Activated CD4-positive, alpha-beta T cell treated with anti-CD3 and anti-CD28 coated beads, Interleukin-2, amount 10 ng/mL, durations not matched to agents 24 days and 14 days (primary cell): ENCODE measurements at regions of chr9 and their contacts with region 1.

Region 1: GRCh38 chr9:77841739-77842386 is 189.7 kb downstream of the GNAQ start:
- DNase-seq: no peak
- H3K4me3 Mint-ChIP-seq: no peak overlapping the region
- H3K27ac Mint-ChIP-seq: no peak overlapping the region
- H3K4me1 Mint-ChIP-seq: peaks cover 11% of the 10 kb centered on the region
- H3K27me3 Mint-ChIP-seq: no peaks in the 10 kb centered on the region

Region 2: DNA sequence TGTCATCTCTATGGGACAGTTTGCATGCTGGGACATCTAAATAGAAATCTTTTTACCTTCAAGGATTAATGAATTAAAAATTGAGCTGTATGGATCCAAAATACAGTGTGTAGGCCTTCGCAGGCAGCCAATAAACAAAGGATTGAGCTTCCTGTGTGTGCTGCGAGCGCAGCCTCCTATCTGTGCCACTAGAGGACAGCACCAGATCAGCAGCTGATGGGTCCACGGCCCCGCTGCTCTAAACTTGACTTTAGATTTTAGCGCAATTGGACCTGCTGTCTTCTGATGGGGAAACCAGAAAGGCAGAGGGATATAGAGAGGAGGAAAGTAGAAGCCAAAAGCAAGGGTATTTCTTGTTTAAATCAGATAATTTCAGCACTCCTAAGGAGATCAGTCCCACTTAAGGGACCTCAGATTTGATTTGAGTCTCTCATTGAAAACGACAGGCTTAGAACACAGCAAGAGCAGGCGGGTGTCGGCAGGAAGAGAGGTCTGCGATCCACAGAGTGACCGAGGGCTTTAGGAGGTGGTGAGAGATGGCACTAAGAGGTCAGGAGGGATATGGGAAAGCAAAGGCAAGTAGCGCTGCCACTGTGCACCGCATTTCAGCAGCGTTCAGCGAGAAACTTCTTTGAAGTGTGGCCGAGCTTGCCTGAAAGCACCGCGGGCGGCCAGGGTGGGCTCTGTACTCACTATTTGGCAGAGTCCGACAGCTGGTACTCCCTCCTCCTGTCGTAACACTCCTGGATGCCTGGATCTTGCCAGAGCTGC is 408.0 kb before region 1 on chr9:
- intact Hi-C with region 1: loop called (anchors 2 kb)
- DNase-seq: peak; percentile 82
- H3K4me3 Mint-ChIP-seq: no peak overlapping the region
- H3K27ac Mint-ChIP-seq: no peak overlapping the region
- H3K4me1 Mint-ChIP-seq: no peaks in the 10 kb centered on the region
- H3K27me3 Mint-ChIP-seq: peaks cover 2% of the 10 kb centered on the region

Region 3: GRCh38 chr9:77556396-77556795 is 285.5 kb before region 1 on chr9:
- intact Hi-C with region 1: no loop called
- DNase-seq: no peak
- H3K4me3 Mint-ChIP-seq: no peak overlapping the region
- H3K27ac Mint-ChIP-seq: no peak overlapping the region
- H3K4me1 Mint-ChIP-seq: no peaks in the 10 kb centered on the region
- H3K27me3 Mint-ChIP-seq: peaks cover 11% of the 10 kb centered on the region

Region 4: DNA sequence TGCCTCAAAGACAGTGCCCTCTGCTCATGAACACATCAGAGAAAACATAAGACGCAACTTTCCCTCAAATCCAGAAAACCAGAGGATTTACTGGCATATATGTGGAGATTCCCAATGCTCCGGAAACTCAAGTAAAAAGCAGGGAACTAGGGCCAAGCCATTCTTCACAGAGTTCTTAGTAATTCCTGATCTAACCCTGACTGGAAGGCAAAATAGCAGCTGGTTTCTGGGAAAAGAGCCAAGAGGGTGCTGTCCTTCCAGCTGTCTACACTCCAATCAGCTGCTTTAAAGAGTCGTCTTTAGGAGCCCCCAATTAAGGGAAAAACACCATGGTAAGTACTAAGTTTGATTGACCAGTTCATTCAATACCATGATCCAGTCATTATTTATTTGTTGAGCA is 243.3 kb before region 1 on chr9:
- intact Hi-C with region 1: no loop called
- DNase-seq: no peak
- H3K4me3 Mint-ChIP-seq: no peak overlapping the region
- H3K27ac Mint-ChIP-seq: no peak overlapping the region
- H3K4me1 Mint-ChIP-seq: peaks cover 7% of the 10 kb centered on the region
- H3K27me3 Mint-ChIP-seq: no peaks in the 10 kb centered on the region

Region 5: DNA sequence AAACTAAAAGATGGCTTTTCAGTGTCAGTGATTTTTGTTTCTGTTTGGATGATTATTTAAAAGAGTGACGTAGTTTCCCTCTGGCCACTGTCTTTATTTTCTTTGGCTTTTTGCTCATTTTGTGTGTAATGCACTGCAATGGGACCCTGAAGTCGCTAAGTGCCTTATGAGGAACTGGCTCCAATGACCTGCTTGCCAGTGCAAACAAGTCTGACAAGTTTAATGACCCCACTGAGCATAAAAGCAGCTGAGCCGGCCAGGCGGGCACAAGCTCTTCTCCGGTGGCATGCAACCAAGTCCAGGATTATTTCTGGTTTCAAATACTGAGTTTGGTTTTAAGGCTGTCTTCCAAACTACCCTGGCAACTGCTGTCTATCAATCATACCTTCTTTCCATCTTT is 178.1 kb before region 1 on chr9:
- intact Hi-C with region 1: loop called (anchors 2 kb)
- DNase-seq: no peak
- H3K4me3 Mint-ChIP-seq: no peak overlapping the region
- H3K27ac Mint-ChIP-seq: no peak overlapping the region
- H3K4me1 Mint-ChIP-seq: no peaks in the 10 kb centered on the region
- H3K27me3 Mint-ChIP-seq: peaks cover 2% of the 10 kb centered on the region

Region 6: GRCh38 chr9:77764894-77765780 is 76.7 kb before region 1 on chr9:
- intact Hi-C with region 1: loop called (anchors 2 kb)
- DNase-seq: no peak
- H3K4me3 Mint-ChIP-seq: no peak overlapping the region
- H3K27ac Mint-ChIP-seq: no peak overlapping the region
- H3K4me1 Mint-ChIP-seq: no peaks in the 10 kb centered on the region
- H3K27me3 Mint-ChIP-seq: no peaks in the 10 kb centered on the region

Region 7: DNA sequence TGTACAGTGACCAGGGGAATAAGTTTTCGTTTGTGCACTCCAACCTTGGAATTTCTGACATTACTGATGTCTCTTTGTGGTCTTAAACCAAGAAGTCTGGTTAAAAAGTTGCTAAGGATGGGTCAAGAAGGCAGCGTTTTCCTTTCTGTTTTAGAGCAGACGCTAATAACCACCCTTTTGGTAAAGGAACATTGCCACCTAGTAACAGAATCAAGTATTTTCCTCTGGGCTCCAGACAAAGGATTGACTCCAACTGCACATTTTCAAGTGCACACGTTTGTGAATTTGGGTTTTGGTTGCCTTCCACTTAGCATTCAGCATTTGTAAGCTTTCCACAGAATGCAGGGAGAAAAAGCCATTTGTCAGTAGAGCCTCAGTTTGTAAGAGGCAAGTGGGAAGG is 371.8 kb after region 1 on chr9:
- intact Hi-C with region 1: loop called (anchors 10 kb)
- DNase-seq: peak; percentile 66
- H3K4me3 Mint-ChIP-seq: peak overlapping the region; percentile 34
- H3K27ac Mint-ChIP-seq: no peak overlapping the region
- H3K4me1 Mint-ChIP-seq: peaks cover 30% of the 10 kb centered on the region
- H3K27me3 Mint-ChIP-seq: no peaks in the 10 kb centered on the region